Vagina (tissue), 2 donors: ENCODE measurements at regions of chr10 and their contacts with region 1.

Region 1: GRCh38 chr10:74841265-74841973 is 15.0 kb downstream of the KAT6B start:
- DNase-seq: no peak
- H3K4me3 ChIP-seq: no peak overlapping the region
- H3K27ac ChIP-seq: no peak overlapping the region
- H3K4me1 ChIP-seq: peaks cover 20% of the 10 kb centered on the region
- H3K27me3 ChIP-seq: no peaks in the 10 kb centered on the region
- CTCF ChIP-seq: no peak
- POLR2A ChIP-seq: no peak

Region 2: GRCh38 chr10:74669210-74669609 is 172.2 kb before region 1 on chr10:
- intact Hi-C with region 1: no loop called
- DNase-seq: no peak
- H3K4me3 ChIP-seq: no peak overlapping the region
- H3K27ac ChIP-seq: no peak overlapping the region
- H3K4me1 ChIP-seq: no peaks in the 10 kb centered on the region
- H3K27me3 ChIP-seq: no peaks in the 10 kb centered on the region
- CTCF ChIP-seq: no peak
- POLR2A ChIP-seq: no peak

Region 3: DNA sequence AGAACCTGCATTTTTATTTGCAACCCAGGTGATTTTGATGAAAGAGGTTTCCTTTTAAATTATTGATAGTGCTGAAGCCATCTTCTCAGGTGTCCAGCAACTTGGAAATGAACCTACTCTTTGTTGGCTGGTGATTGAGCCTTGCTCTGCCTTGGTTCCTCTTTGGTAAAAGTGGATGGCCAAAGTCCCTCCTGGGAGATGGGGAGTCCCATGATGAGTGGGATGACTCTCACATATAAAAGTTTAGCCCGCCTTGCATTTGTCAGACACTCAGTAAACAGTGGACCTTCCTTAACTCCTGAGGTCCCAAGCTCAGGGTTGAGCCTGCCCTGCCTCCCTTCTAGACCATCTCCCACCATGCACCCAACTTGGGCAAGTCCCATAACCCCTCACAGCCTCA is 43.9 kb before region 1 on chr10:
- intact Hi-C with region 1: loop called (anchors 2 kb)
- DNase-seq: no peak
- H3K4me3 ChIP-seq: no peak overlapping the region
- H3K27ac ChIP-seq: no peak overlapping the region
- H3K4me1 ChIP-seq: no peaks in the 10 kb centered on the region
- H3K27me3 ChIP-seq: no peaks in the 10 kb centered on the region
- CTCF ChIP-seq: no peak
- POLR2A ChIP-seq: no peak

Region 4: GRCh38 chr10:74947781-74948401 is 106.5 kb after region 1 on chr10:
- intact Hi-C with region 1: no loop called
- DNase-seq: no peak
- H3K4me3 ChIP-seq: no peak overlapping the region
- H3K27ac ChIP-seq: no peak overlapping the region
- H3K4me1 ChIP-seq: peaks cover 39% of the 10 kb centered on the region
- H3K27me3 ChIP-seq: no peaks in the 10 kb centered on the region
- CTCF ChIP-seq: no peak
- POLR2A ChIP-seq: no peak